ENCODE measurements at regions of chr7 and their contacts with region 1.

Region 1: DNA sequence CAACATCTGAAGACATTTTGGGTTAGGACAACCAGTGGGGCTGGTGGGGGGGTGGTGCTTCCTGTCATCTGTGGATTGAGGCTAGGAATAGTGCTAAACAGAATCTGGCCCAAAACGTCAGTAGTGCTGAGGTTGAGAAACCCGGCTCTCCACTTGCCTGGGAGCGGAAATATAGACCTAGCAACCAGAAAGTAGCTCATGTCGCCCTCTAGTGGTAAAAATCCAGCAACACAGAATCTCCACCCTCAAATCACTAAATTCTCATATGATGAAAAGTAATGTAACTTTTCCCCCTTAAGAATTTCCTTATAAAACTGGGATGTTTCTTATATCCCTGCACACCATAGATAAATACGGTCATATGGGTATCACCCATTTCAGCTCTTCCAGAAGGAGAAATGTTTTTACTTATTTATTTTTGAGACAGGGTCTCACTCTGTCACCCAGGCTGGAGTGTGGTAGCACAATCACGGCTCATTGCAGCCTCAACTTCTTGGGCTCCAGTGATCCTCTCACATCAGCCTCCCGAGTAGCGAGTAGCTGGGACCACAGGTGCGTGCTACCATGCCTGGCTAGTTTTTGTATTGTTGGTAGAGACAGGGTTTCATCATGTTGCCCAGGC is 34.4 kb downstream of the ZC3HAV1 start:
- DNase-seq: peak; percentile 56
- ATAC-seq: peak; percentile 97
- H3K4me3 ChIP-seq: no peak overlapping the region
- H3K27ac ChIP-seq: no peak overlapping the region
- H3K4me1 ChIP-seq: 0 out of 4 replicates have a peak, but pooled peaks cover 0 to 3% of the 10 kb centered on the region in 2 experiments
- H3K27me3 ChIP-seq: no peaks in the 10 kb centered on the region
- CTCF ChIP-seq: peak; percentile 68 to 89 (median 76)
- POLR2A ChIP-seq: no peak
- RAD21 ChIP-seq: peak; percentile 79

Region 2: DNA sequence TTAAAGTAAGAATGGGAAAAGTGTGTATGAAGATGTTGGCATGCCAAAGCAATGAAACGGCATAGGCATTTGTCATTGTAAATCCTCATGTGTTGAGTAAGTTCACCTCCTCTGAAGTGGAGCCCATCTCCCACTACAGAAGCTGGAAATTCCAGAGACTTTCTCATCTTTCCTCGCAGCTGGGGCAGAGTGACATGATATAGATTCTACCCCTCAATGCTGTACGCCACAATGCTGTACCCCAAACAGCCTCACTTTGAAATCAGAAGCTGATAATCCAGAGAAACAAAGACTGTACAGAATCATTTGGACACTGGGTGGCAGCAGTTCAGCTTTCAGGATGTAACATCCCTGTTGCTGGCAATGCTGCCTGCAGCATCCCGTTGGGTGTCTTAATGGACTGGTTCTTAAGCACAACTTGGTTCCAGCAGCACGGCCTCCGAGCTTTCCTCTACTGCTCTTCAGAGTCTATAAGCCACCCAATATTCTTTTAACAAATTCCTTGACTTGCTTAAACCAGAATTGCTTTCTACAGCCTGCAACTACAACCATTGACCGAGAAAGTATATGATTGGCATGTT is 58.1 kb before region 1 on chr7:
- CTCF ChIA-PET with region 1: interaction called, 21 read pairs
- POLR2A ChIA-PET with region 1: no interaction called
- RAD21 ChIA-PET with region 1: no interaction called
- intact Hi-C with region 1: loop called (anchors 1 kb)
- DNase-seq: peak; percentile 54
- ATAC-seq: peak; percentile 96
- H3K4me3 ChIP-seq: no peak overlapping the region
- H3K27ac ChIP-seq: no peak overlapping the region
- H3K4me1 ChIP-seq: no peaks in the 10 kb centered on the region
- H3K27me3 ChIP-seq: no peaks in the 10 kb centered on the region
- CTCF ChIP-seq: peak; percentile 64 to 71 (median 69)
- POLR2A ChIP-seq: no peak
- RAD21 ChIP-seq: peak; percentile 82

Region 3: DNA sequence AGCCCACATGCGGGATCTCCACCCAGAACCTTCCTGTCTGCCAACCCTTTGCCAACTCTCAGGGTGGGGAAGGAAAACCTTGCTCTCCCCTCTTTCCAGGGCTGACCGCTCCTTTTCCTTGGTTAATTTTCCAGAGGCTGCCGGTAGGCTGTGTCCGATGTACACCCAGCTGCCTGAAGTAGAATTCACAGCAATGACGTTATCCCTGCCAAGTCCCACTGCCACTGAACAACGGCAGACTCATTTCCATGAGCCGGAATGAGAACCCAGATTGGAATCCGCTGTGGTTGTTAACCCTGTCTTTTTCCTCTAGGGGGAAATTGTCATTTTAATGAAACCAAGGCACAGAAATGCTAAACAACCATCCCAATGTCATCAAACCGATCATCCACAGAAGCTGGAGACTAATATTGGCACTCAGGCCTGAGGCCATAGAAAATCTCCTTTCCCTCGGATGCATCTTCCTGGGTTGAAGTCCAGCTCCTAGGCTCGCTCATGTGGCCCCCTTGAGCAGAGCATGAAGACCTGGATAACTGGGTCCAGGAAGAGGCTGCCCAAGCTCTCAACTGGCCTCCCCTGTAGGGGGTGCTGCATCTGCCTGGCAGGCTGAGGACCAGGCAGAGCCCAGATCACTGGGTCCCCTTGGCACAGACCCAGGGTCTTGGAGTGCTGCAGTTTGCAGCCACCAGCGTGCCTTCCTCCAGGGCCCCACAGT is 378.0 kb after region 1 on chr7:
- CTCF ChIA-PET with region 1: no interaction called
- POLR2A ChIA-PET with region 1: no interaction called
- RAD21 ChIA-PET with region 1: no interaction called
- intact Hi-C with region 1: no loop called
- DNase-seq: no peak
- ATAC-seq: 0 out of 2 replicates have a peak, but pooled peaks have one; percentile 27
- H3K4me3 ChIP-seq: no peak overlapping the region
- H3K27ac ChIP-seq: no peak overlapping the region
- H3K4me1 ChIP-seq: peaks cover 16 to 22% of the 10 kb centered on the region in 2 experiments
- H3K27me3 ChIP-seq: no peaks in the 10 kb centered on the region
- CTCF ChIP-seq: peak in 2 of 3 experiments; percentile 29 to 34; a peak in 2 of 6 replicates
- POLR2A ChIP-seq: no peak
- RAD21 ChIP-seq: no peak